ENCODE measurements at regions of chr1 and their contacts with region 1.

Region 1: DNA sequence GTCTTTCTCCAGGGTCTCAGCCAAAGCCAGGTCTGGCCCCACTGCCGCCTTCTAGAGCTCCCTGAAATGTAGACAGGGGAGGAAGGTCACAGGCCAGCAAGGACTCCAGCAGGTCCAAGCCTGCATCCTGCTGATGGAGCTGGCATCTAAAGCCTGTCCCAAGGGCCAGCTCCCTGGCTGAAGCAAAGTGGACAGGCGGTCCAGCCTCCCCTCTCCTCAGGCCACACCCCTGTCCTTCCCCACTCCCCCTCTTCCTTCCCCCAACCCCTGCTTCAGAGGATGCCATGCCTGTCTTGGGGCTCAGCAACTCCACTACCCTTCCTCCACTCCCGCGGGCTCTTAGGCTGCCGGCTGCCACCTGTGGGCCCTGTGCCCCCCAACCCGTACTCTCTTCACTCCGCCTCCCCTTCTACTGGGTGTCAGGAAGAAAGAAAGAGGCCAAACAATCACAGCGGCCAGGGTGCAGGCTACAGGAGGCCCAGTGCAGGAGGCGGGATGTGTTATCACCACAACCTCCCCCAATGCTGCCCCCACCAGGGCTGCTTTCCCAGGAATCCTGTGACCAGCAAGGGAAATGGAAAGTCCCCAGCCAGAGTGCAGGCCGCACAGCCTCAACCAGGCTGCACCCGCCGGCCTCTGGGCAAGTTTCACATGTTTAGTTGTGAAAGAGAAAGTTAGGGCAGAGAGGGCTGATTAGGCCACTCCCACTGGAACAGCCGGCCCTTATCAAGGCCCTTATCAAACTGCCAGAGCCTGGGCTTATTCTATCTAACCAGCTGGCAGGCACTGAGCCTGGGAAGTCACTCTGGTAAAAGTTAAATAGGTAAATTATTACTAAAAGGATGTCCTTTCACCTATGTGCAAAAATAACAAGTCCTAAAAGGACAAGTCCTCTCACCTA is 34.1 kb downstream of the ACOT7 start:
- DNase-seq: peak; percentile 77
- ATAC-seq: peak; percentile 84
- H3K4me3 Mint-ChIP-seq: peak overlapping the region; percentile 46
- H3K27ac Mint-ChIP-seq: peak overlapping the region; percentile 91
- H3K4me1 Mint-ChIP-seq: peaks cover 38% of the 10 kb centered on the region
- H3K27me3 Mint-ChIP-seq: no peaks in the 10 kb centered on the region
- CTCF ChIP-seq: no peak

Region 2: GRCh38 chr1:6378096-6378746 is 18.8 kb after region 1 on chr1:
- CTCF ChIA-PET with region 1: interaction called, 23 read pairs
- POLR2A ChIA-PET with region 1: no interaction called
- intact Hi-C with region 1: no loop called
- DNase-seq: no peak
- ATAC-seq: no peak
- H3K4me3 Mint-ChIP-seq: no peak overlapping the region
- H3K27ac Mint-ChIP-seq: no peak overlapping the region
- H3K4me1 Mint-ChIP-seq: no peaks in the 10 kb centered on the region
- H3K27me3 Mint-ChIP-seq: no peaks in the 10 kb centered on the region
- CTCF ChIP-seq: no peak

Region 3: DNA sequence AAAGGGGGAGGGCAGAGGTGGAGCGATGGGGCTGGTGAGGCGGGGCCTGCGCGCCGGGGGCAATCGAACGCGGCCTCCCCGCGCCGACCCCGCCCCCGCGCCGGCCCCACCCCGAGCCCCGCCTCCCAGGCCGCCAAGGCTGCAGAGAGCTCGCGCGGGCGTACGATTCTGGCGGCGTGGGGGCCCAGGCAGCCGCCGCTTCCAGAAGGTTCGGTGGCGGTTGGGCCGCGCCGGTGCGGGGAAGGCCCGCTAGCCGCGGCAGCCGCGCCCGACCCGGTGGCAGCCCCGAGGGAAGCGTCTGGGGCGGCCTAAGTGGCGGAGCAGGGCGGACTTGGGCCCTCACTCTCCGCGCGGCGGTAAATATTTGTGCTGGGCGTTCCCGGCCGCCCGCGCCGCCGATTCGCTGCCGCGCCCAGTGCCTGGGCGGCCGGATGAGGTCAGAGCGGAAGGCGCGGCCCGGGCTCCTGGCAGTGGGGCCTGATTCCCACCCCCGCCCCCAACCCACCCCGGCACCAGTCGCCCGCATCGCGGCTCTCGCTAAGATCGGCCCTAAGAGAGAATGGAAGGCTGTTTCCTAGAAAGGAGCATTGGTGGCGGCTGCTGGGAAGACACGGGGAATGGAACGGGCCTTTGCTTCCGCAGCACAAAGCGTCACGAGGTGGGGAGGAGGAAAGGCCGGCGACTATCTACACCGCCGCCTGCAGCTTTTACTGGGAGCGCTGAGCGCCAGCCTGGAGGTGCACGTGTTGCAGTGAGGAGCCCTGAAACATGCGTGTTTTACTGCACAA is 34.1 kb after region 1 on chr1 and contains the start of gene ACOT7:
- CTCF ChIA-PET with region 1: interaction called, 30 read pairs
- POLR2A ChIA-PET with region 1: interaction called, 13 read pairs
- intact Hi-C with region 1: loop called (anchors 5 kb)
- DNase-seq: peak; percentile 94
- ATAC-seq: peak; percentile 91
- H3K4me3 Mint-ChIP-seq: peak within 1 kb of the TSS; percentile 84
- H3K27ac Mint-ChIP-seq: peak within 1 kb of the TSS; percentile 95
- H3K4me1 Mint-ChIP-seq: peaks cover 21% of the 10 kb centered on the region
- H3K27me3 Mint-ChIP-seq: no peaks in the 10 kb centered on the region
- CTCF ChIP-seq: no peak
- total RNA-seq, gene ACOT7: 80.4 to 86.7 TPM

Region 4: DNA sequence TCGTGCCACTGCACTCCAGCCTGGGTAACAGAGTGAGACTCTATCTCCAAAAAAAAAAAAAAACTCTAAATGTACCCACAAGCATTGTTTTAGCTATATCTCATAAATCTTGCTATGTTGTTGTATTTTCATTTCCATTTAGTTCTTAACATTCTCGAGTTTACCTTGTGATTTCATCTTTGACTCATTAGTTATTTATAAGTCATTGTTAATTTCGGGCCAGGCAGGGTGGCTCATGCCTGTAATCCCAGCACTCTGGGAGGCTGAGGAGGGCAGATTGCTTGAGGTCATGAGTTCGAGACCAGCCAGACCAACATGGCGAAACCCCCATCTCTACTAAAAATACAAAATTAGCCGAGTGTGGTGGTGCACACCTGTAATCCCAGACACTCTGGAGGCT is 48.6 kb after region 1 on chr1:
- CTCF ChIA-PET with region 1: interaction called, 62 read pairs
- POLR2A ChIA-PET with region 1: no interaction called
- intact Hi-C with region 1: no loop called
- DNase-seq: no peak
- ATAC-seq: no peak
- H3K4me3 Mint-ChIP-seq: no peak overlapping the region
- H3K27ac Mint-ChIP-seq: no peak overlapping the region
- H3K4me1 Mint-ChIP-seq: no peaks in the 10 kb centered on the region
- H3K27me3 Mint-ChIP-seq: peaks cover 7% of the 10 kb centered on the region
- CTCF ChIP-seq: no peak